GM12878 (cell line): ENCODE measurements at regions of chr11 and their contacts with region 1.

Region 1: GRCh38 chr11:119101759-119102423 is at the start of gene DPAGT1:
- DNase-seq: peak; percentile 92
- ATAC-seq: peak; percentile 91
- H3K4me3 ChIP-seq: peak within 1 kb of the TSS; percentile 97
- H3K27ac ChIP-seq: peak within 1 kb of the TSS; percentile 96
- H3K4me1 ChIP-seq: peaks cover 27% of the 10 kb centered on the region
- H3K27me3 ChIP-seq: no peaks in the 10 kb centered on the region
- CTCF ChIP-seq: no peak
- EP300 ChIP-seq: no peak
- POLR2A ChIP-seq: peak; percentile 59; the same call in 1 of the 2 replicates
- RAD21 ChIP-seq: no peak
- polyA plus RNA-seq, gene DPAGT1: 33.0 to 47.8 TPM

Region 2: GRCh38 chr11:118928108-118928870 is 173.6 kb before region 1 on chr11:
- CTCF ChIA-PET with region 1: interaction called, 3 read pairs
- POLR2A ChIA-PET with region 1: no interaction called
- RAD21 ChIA-PET with region 1: interaction called, 3 read pairs
- SMC1A ChIA-PET with region 1: no interaction called
- in situ Hi-C with region 1: no loop called
- intact Hi-C with region 1: loop called (anchors 5 kb)
- DNase-seq: peak; percentile 67
- ATAC-seq: peak; percentile 67
- H3K4me3 ChIP-seq: peak overlapping the region; percentile 97
- H3K27ac ChIP-seq: peak overlapping the region; percentile 67
- H3K4me1 ChIP-seq: peaks cover 35% of the 10 kb centered on the region
- H3K27me3 ChIP-seq: no peaks in the 10 kb centered on the region
- CTCF ChIP-seq: peak; percentile 93 to 97 (median 96)
- EP300 ChIP-seq: peak; percentile 15 to 60; a peak in 1 of 4 replicates
- POLR2A ChIP-seq: 0 out of 2 replicates have a peak, but pooled peaks have one; percentile 49
- RAD21 ChIP-seq: peak; percentile 63

Region 3: GRCh38 chr11:119067371-119068222 is 34.3 kb before region 1 on chr11 and contains the start of gene VPS11:
- CTCF ChIA-PET with region 1: interaction called, 13 read pairs
- POLR2A ChIA-PET with region 1: interaction called, 5 read pairs
- RAD21 ChIA-PET with region 1: interaction called, 10 read pairs
- SMC1A ChIA-PET with region 1: interaction called, 4 read pairs
- in situ Hi-C with region 1: no loop called
- intact Hi-C with region 1: no loop called
- DNase-seq: peak; percentile 78
- ATAC-seq: peak; percentile 98
- H3K4me3 ChIP-seq: peak within 1 kb of the TSS; percentile 80
- H3K27ac ChIP-seq: peak within 1 kb of the TSS; percentile 59
- H3K4me1 ChIP-seq: no peaks in the 10 kb centered on the region
- H3K27me3 ChIP-seq: no peaks in the 10 kb centered on the region
- CTCF ChIP-seq: no peak
- EP300 ChIP-seq: 0 out of 4 replicates have a peak, but pooled peaks have one; percentile 17 to 29
- POLR2A ChIP-seq: peak; percentile 85
- RAD21 ChIP-seq: no peak
- polyA plus RNA-seq, gene VPS11: 18.3 to 18.9 TPM

Region 4: GRCh38 chr11:119121008-119121810 is 19.3 kb after region 1 on chr11 and contains the start of gene HINFP:
- CTCF ChIA-PET with region 1: interaction called, 9 read pairs
- POLR2A ChIA-PET with region 1: interaction called, 76 read pairs
- RAD21 ChIA-PET with region 1: interaction called, 22 read pairs
- SMC1A ChIA-PET with region 1: interaction called, 17 read pairs
- in situ Hi-C with region 1: no loop called
- intact Hi-C with region 1: no loop called
- DNase-seq: peak; percentile 99
- ATAC-seq: peak; percentile 99
- H3K4me3 ChIP-seq: peak within 1 kb of the TSS; percentile 92
- H3K27ac ChIP-seq: peak within 1 kb of the TSS; percentile 65
- H3K4me1 ChIP-seq: peaks cover 13% of the 10 kb centered on the region
- H3K27me3 ChIP-seq: no peaks in the 10 kb centered on the region
- CTCF ChIP-seq: no peak
- EP300 ChIP-seq: no peak
- POLR2A ChIP-seq: peak; percentile 83
- RAD21 ChIP-seq: no peak
- polyA plus RNA-seq, gene HINFP: 13.1 to 18.9 TPM

Region 5: GRCh38 chr11:119196833-119197483 is 95.1 kb after region 1 on chr11:
- CTCF ChIA-PET with region 1: interaction called, 9 read pairs
- POLR2A ChIA-PET with region 1: interaction called, 4 read pairs
- RAD21 ChIA-PET with region 1: interaction called, 5 read pairs
- SMC1A ChIA-PET with region 1: interaction called, 5 read pairs
- in situ Hi-C with region 1: no loop called
- intact Hi-C with region 1: loop called (anchors 5 kb)
- DNase-seq: peak; percentile 59
- ATAC-seq: peak; percentile 97
- H3K4me3 ChIP-seq: no peak overlapping the region
- H3K27ac ChIP-seq: no peak overlapping the region
- H3K4me1 ChIP-seq: no peaks in the 10 kb centered on the region
- H3K27me3 ChIP-seq: 0 out of 4 replicates have a peak, but pooled peaks cover 0 to 2% of the 10 kb centered on the region in 2 experiments
- CTCF ChIP-seq: peak; percentile 75 to 92 (median 84)
- EP300 ChIP-seq: no peak
- POLR2A ChIP-seq: no peak
- RAD21 ChIP-seq: peak; percentile 92